Activated T-helper 1 cell treated with anti-CD3 and anti-CD28 coated beads, Interleukin-12 subunit alpha, Interleukin-12 subunit beta, Interleukin-2, Interleukin-4 antibody, amounts not matched to agents 30 ng/mL and 10 ng/mL and 1 ng/mL, durations not matched to agents 14 hours and 24 hours and 36 hours (primary cell): ENCODE measurements at regions of chr2 and their contacts with region 1.

Region 1: DNA sequence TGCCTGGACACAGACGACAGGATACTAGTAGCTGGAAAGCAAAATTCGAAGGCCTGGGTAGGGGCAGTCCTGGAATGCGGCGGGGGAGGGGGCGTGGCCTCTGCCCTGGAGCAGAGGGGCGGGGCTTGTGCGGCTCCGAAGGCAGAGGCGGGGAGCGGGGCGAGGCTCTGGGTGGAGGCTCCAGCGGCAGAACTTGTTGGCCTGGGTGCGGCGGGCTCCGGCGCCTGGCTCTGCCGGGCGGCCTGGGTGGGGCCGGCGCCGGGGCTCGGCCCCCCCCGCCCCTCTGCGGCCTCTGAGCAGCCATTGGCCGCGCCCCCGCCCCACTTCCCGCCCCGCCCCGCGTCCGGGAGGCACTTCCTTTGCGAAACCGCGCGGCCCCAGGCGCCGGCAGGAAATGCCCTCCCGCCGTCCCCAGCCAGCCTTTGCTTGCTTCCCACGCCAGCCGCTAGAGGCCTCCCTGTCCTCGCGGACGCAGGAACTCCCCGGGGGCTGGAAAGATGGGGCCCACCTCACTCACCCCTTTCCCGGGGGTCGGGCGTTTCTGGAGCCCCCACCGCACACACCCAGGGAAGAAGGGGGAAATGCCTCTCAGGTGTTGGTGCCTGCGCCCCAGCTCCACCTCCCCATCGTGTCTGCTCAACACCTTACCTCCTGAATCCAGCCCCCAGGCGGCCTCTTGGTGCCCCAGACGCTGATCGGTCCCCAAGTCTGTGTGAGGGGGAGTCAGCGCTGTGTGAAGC is 6.7 kb downstream of the CTDSP1 start:
- DNase-seq: peak; percentile 90
- H3K4me3 Mint-ChIP-seq: peak overlapping the region; percentile 81
- H3K27ac Mint-ChIP-seq: peak overlapping the region; percentile 74
- H3K4me1 Mint-ChIP-seq: peaks cover 29% of the 10 kb centered on the region
- H3K27me3 Mint-ChIP-seq: no peaks in the 10 kb centered on the region

Region 2: GRCh38 chr2:218292048-218293014 is 114.0 kb before region 1 on chr2 and contains the start of gene TMBIM1:
- intact Hi-C with region 1: loop called (anchors 1 kb)
- DNase-seq: peak; percentile 79
- H3K4me3 Mint-ChIP-seq: peak within 1 kb of the TSS; percentile 88
- H3K27ac Mint-ChIP-seq: peak within 1 kb of the TSS; percentile 94
- H3K4me1 Mint-ChIP-seq: peaks cover 57% of the 10 kb centered on the region
- H3K27me3 Mint-ChIP-seq: no peaks in the 10 kb centered on the region
- total RNA-seq, gene TMBIM1: 66.2 and 70.5 TPM in 2 replicates

Region 3: GRCh38 chr2:218466016-218466521 is 59.7 kb after region 1 on chr2:
- intact Hi-C with region 1: loop called (anchors 1 kb)
- DNase-seq: no peak
- H3K4me3 Mint-ChIP-seq: no peak overlapping the region
- H3K27ac Mint-ChIP-seq: no peak overlapping the region
- H3K4me1 Mint-ChIP-seq: peaks cover 4% of the 10 kb centered on the region
- H3K27me3 Mint-ChIP-seq: no peaks in the 10 kb centered on the region

Region 4: DNA sequence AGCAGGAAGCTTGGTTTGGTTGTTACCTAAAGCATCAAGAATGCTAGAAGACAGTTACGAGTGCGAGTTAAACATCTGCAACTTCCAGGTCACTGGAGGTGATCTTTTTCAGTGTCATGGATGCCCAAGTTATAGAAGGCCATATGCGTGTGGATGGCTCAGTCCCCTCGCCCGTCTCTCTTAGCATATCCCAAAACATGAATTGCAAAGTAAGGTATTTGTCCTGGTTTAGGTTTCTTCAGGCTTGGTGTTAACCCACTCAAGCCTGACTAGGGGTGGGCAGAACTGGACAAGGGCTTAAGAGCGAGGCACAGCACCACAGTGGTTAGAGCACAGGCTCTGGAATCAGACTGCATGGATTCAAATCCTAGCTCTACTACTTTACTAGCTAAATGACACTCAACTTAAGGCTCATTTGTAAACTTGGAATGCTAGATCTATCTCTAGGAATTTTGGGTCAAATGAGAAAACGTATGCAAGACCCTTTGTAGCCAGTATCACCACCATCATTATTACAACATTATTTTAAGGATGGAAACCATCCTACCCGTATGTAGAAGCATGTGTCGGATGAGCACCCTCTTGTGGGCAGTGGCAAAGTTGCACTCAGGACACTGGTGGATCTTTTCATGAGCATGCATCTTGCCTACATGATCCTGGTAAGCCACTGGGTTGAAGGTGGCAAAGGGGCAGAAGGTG is 241.9 kb after region 1 on chr2:
- intact Hi-C with region 1: loop called (anchors 1 kb)
- DNase-seq: peak; percentile 27
- H3K4me3 Mint-ChIP-seq: no peak overlapping the region
- H3K27ac Mint-ChIP-seq: no peak overlapping the region
- H3K4me1 Mint-ChIP-seq: peaks cover 6% of the 10 kb centered on the region
- H3K27me3 Mint-ChIP-seq: no peaks in the 10 kb centered on the region

Region 5: GRCh38 chr2:218671654-218672566 is 265.5 kb after region 1 on chr2 and contains the starts of genes RNF25 and STK36:
- intact Hi-C with region 1: loop called (anchors 2 kb)
- DNase-seq: peak; percentile 77
- H3K4me3 Mint-ChIP-seq: peak within 1 kb of the TSS; percentile 100
- H3K27ac Mint-ChIP-seq: peak within 1 kb of the TSS; percentile 93
- H3K4me1 Mint-ChIP-seq: peaks cover 22% of the 10 kb centered on the region
- H3K27me3 Mint-ChIP-seq: no peaks in the 10 kb centered on the region
- total RNA-seq, gene RNF25: 29.1 and 31.6 TPM in 2 replicates
- total RNA-seq, gene STK36: 15.9 TPM in 2 replicates

Region 6: DNA sequence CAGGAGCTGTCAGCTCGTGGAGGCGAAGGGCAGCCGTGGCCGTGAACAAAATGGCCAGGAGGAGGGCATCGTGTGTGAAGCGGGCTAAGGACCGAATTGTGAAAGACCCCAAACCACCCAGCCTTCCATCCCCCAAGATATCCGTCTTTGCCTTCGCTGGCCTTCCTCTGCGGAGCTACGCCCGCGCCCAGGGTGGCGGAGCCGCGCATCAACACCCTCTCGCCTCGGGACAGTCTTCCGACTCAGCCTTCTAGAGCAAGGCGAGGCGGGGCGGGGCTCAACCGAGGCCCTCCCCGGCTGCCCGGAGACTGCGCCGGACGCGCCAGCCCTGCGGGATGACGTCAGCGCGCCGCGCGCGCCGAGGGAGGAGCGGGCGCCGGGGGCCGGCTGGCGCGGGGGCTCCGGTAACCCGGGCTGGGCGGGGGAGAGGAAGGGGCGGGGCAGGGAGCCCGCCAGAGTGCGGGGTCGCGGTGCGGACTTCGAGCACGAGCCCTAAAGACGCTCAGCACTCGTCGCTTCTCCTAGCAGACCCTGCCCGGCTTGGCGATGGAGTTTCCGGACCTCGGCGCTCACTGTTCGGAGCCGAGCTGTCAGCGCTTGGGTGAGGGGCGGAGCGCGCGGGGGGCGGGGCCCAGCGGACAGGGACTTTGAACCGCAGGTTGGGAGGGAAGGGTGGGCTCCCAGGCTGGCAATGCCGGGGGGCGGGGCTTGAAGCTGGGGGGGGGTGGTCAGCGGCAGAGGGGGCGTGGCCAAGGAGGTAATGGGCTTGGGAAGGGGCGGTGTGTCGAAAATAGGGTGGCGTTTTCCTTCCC is 800.3 kb after region 1 on chr2 and contains the start of gene ZFAND2B:
- intact Hi-C with region 1: loop called (anchors 1 kb)
- DNase-seq: peak; percentile 96
- H3K4me3 Mint-ChIP-seq: peak within 1 kb of the TSS; percentile 92
- H3K27ac Mint-ChIP-seq: peak within 1 kb of the TSS; percentile 99
- H3K4me1 Mint-ChIP-seq: peaks cover 40% of the 10 kb centered on the region
- H3K27me3 Mint-ChIP-seq: no peaks in the 10 kb centered on the region
- total RNA-seq, gene ZFAND2B: 35.0 and 41.3 TPM in 2 replicates